T-cell (primary cell): ENCODE measurements at regions of chr1 and their contacts with region 1.

Region 1: DNA sequence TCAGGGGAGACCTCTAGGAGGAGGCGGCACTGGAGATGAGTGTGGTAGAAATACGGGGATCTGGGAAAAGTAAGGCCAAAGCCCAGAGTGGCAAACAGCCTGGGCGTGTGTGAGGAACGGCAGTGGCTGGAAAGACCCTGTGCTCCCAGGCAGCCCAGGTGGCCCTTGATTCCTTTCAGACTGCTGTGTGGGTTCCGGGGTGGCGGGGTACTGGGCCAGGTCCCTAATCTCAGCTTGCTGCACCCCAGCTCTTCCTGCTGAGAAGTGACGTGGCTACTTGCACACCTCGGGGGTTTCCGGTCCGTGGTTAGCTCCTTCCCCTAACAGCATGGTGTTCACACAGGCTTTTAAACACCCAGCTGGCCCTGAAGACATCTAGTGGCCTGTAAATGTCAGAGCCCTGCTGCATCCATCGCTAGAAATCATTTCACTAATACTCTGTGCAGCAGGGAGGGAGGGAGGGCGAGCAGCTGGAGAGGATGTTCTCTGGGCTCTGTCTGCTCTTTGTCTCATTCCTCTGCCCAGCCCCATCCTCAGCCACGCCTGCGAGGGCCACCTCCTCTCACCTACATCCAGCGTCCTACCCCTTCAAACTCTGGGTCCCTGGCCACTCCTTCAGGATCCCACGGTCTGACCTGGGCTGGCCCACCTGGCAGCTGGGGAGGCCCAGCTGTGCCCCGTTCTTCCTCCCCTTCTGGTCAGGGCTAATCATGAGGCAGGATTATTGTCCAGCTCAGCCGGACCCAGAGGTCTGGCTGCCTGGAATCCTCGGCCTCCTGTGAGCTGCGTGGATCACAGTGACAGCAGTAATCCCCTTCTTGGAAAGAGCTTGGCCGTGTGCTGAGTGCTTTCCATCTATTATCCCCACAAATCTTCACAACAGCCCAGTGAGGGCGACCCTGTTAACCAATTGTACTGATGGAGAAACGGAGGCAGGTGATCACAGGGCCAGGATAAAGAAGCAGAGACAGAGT is 7.2 kb downstream of the ZDHHC18 start:
- DNase-seq: peak; percentile 61 to 97 (median 93)
- ATAC-seq: peak; percentile 96 to 98 (median 96)
- H3K4me3 ChIP-seq: peak overlapping the region; percentile 32 to 56
- H3K4me3 Mint-ChIP-seq: peak overlapping the region; percentile 63 to 76 (median 72)
- H3K27ac ChIP-seq: peak overlapping the region; percentile 98
- H3K27ac Mint-ChIP-seq: peak overlapping the region; percentile 99
- H3K4me1 ChIP-seq: peaks cover 19 to 73% of the 10 kb centered on the region in 2 experiments
- H3K4me1 Mint-ChIP-seq: peaks cover 75 to 76% (median 75%) of the 10 kb centered on the region in 3 donors
- H3K27me3 ChIP-seq: no peaks in the 10 kb centered on the region
- H3K27me3 Mint-ChIP-seq: no peaks in the 10 kb centered on the region

Region 2: DNA sequence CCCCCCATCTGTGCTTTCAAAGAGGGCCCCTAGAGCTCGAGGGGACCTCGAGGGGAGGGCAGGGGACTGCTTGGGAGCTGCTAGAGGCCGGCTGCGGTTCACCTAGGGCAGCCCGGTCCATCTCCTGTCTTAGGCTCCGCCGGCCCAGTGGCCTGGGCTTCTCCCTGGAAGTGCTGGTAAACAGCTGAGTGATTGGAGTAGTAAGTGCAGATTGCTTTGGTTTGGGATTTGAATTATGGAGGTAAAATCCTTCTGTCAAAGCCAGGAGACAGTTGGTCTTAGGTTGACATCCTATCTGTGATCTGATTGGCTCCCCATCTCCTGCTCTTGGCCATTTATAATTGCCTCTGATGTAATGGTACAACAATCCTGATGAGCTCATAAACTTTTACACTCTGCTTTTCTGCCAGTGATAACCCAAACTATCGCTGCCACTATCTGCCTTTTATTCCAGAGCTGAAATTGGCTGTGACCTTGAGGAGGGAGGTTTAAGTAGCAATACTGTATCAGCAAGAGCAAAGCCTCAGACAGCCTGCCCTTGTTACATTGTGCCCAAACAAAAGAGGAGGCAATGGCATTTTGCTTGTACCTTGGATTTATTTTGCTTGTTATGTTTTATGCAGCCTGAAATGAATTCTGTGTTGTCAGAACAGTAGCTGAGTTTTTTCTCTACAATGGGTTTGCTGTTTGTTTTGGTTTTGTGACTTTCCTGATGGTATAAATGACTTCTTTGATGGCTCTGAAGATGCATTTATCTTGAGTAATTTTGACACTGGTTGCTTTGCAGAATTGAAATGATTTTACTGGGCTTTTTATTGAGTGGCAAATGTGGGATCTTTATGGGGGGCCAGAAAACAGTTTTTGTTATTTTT is 135.5 kb before region 1 on chr1:
- CTCF ChIA-PET with region 1: interaction called in 1 of 2 experiments, 11 read pairs
- POLR2A ChIA-PET with region 1: no interaction called
- DNase-seq: peak in 31 of 35 experiments; percentile 3 to 81 (median 31)
- ATAC-seq: peak in 3 of 4 experiments; percentile 6 to 44 (median 13)
- H3K4me3 ChIP-seq: peak overlapping the region; percentile 86 to 88
- H3K4me3 Mint-ChIP-seq: no peak overlapping the region
- H3K27ac ChIP-seq: peak overlapping the region; percentile 61
- H3K27ac Mint-ChIP-seq: no peak overlapping the region
- H3K4me1 ChIP-seq: peaks cover 44 to 61% of the 10 kb centered on the region in 2 experiments
- H3K4me1 Mint-ChIP-seq: peaks cover 18 to 20% (median 19%) of the 10 kb centered on the region in 3 donors
- H3K27me3 ChIP-seq: no peaks in the 10 kb centered on the region
- H3K27me3 Mint-ChIP-seq: no peaks in the 10 kb centered on the region

Region 3: GRCh38 chr1:26787706-26788514 is 45.8 kb before region 1 on chr1 and contains the start of gene PIGV:
- CTCF ChIA-PET with region 1: interaction called, 4 to 48 read pairs
- POLR2A ChIA-PET with region 1: no interaction called
- DNase-seq: peak; percentile 68 to 93 (median 83)
- ATAC-seq: peak; percentile 75 to 80 (median 78)
- H3K4me3 ChIP-seq: peak within 1 kb of the TSS; percentile 82 to 98
- H3K4me3 Mint-ChIP-seq: peak within 1 kb of the TSS; percentile 86 to 100 (median 98)
- H3K27ac ChIP-seq: peak within 1 kb of the TSS; percentile 97
- H3K27ac Mint-ChIP-seq: peak within 1 kb of the TSS; percentile 99 to 100
- H3K4me1 ChIP-seq: peaks cover 23 to 65% of the 10 kb centered on the region in 2 experiments
- H3K4me1 Mint-ChIP-seq: peaks cover 71 to 79% (median 73%) of the 10 kb centered on the region in 3 donors
- H3K27me3 ChIP-seq: no peaks in the 10 kb centered on the region
- H3K27me3 Mint-ChIP-seq: no peaks in the 10 kb centered on the region
- total RNA-seq, gene PIGV: 10.3 to 24.0 (median 20.3) TPM

Region 4: DNA sequence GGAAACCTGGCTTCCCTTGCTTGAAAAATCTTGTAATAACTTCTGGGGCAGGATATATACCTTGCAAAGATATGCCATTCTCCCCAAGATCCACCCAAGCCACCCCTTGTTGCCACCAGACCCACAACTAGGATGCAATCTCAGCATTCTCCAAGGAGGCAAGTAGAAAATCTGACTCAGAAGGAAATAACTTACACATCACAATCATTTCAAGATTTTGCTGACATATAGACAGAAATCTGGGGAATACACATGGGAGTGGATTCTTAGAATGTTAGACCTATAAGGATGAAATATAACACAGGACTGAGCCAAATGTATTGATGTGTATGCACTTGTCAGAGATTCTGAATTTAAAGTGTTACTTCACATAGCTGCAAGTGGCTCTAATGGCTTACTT is 22.0 kb before region 1 on chr1:
- CTCF ChIA-PET with region 1: interaction called, 11 to 57 read pairs
- POLR2A ChIA-PET with region 1: interaction called, 3 to 7 read pairs
- DNase-seq: no peak
- ATAC-seq: no peak
- H3K4me3 ChIP-seq: no peak overlapping the region
- H3K4me3 Mint-ChIP-seq: no peak overlapping the region
- H3K27ac ChIP-seq: no peak overlapping the region
- H3K27ac Mint-ChIP-seq: no peak overlapping the region
- H3K4me1 ChIP-seq: peaks cover 0 to 14% of the 10 kb centered on the region in 2 experiments
- H3K4me1 Mint-ChIP-seq: peaks cover 11 to 15% (median 11%) of the 10 kb centered on the region in 3 donors
- H3K27me3 ChIP-seq: no peaks in the 10 kb centered on the region
- H3K27me3 Mint-ChIP-seq: no peaks in the 10 kb centered on the region

Region 5: DNA sequence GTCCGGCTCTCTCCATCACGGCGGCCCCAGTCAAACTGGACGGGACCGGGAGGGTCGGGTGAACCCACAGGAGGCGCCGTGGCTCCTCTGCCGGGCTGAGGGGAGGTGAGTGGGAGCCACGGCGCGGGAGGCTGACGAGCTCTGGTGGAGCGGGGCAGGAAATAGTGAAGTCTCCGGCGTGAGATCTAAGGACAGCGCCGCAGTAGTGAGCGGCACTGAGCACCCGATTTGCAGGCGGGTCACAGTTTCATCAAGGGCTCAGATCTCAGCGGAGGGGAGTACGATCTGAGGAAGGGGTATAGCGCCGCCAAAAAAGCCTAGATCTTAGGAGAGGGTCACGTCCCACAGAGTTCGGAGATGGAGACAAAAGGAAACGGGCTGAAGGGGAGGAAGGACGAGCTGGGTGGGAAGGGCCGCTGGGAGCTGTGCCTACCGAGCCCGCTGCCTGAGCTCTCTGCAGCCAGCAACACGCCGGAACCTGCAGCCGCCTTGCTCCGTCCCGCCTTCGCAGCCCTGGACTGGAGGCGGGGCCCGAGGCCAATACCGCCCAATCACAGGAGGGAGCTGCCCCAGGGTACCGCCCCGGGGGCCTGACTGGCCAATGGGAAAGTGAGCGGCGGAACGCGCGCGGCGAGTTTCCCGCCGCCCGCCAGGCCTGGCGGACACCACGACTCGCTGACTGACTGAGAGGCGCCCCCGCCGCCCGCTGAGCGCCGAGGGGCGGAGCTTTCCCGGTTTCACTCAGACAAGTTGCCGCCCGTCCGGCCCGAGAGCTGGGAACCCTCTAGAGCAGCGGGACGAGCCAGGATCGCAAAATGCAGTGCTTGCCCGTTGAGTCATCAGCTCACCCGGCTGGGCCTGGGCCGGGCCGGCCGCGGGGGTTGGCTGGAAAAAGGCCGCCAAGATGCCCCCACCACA is 31.1 kb after region 1 on chr1:
- CTCF ChIA-PET with region 1: interaction called in 1 of 2 experiments, 21 read pairs
- POLR2A ChIA-PET with region 1: interaction called, 3 to 5 read pairs
- DNase-seq: peak; percentile 82 to 96 (median 90)
- ATAC-seq: peak; percentile 94 to 96 (median 94)
- H3K4me3 ChIP-seq: peak overlapping the region; percentile 92 to 99
- H3K4me3 Mint-ChIP-seq: peak overlapping the region; percentile 87 to 95 (median 88)
- H3K27ac ChIP-seq: peak overlapping the region; percentile 72
- H3K27ac Mint-ChIP-seq: peak overlapping the region; percentile 88 to 93
- H3K4me1 ChIP-seq: peaks cover 3 to 32% of the 10 kb centered on the region in 2 experiments
- H3K4me1 Mint-ChIP-seq: peaks cover 17 to 31% (median 23%) of the 10 kb centered on the region in 3 donors
- H3K27me3 ChIP-seq: peaks cover 0 to 2% of the 10 kb centered on the region in 2 experiments
- H3K27me3 Mint-ChIP-seq: no peaks in the 10 kb centered on the region